ENCODE measurements at regions of chr3 and their contacts with region 1.

Region 1: GRCh38 chr3:178436773-178437172 is 99.5 kb upstream of the KCNMB2 start:
- DNase-seq: no peak
- H3K4me3 ChIP-seq: no peak overlapping the region
- CTCF ChIP-seq: peak; percentile 19

Region 2: GRCh38 chr3:178419071-178419470 is 17.7 kb before region 1 on chr3:
- CTCF ChIA-PET with region 1: interaction called, 13 read pairs
- POLR2A ChIA-PET with region 1: no interaction called
- DNase-seq: no peak
- H3K4me3 ChIP-seq: no peak overlapping the region
- CTCF ChIP-seq: no peak

Region 3: GRCh38 chr3:178966299-178967176 is 529.8 kb after region 1 on chr3:
- CTCF ChIA-PET with region 1: interaction called, 96 read pairs
- POLR2A ChIA-PET with region 1: no interaction called
- DNase-seq: peak; percentile 3
- H3K4me3 ChIP-seq: no peak overlapping the region
- CTCF ChIP-seq: peak; percentile 18

Measured in AG04449 (cell line).